ENCODE measurements at regions of chr2 and their contacts with region 1.

Region 1: GRCh38 chr2:42944779-42945415 is 152.5 kb upstream of the HAAO start:
- DNase-seq: no peak
- ATAC-seq: no peak
- H3K4me3 ChIP-seq: no peak overlapping the region
- H3K4me3 Mint-ChIP-seq: no peak overlapping the region
- H3K27ac ChIP-seq: no peak overlapping the region
- H3K27ac Mint-ChIP-seq: no peak overlapping the region
- H3K4me1 ChIP-seq: peaks cover 9% of the 10 kb centered on the region
- H3K4me1 Mint-ChIP-seq: peaks cover 5 to 16% of the 10 kb centered on the region in 2 donors
- H3K27me3 ChIP-seq: no peaks in the 10 kb centered on the region
- H3K27me3 Mint-ChIP-seq: peaks cover 0 to 3% of the 10 kb centered on the region in 2 donors
- CTCF ChIP-seq: no peak

Region 2: GRCh38 chr2:43484323-43484930 is 539.5 kb after region 1 on chr2:
- intact Hi-C with region 1: loop called (anchors 1 kb)
- DNase-seq: peak in 1 of 2 donors; percentile 82
- ATAC-seq: peak in 2 of 3 donors; percentile 44 to 63
- H3K4me3 ChIP-seq: no peak overlapping the region
- H3K4me3 Mint-ChIP-seq: no peak overlapping the region
- H3K27ac ChIP-seq: no peak overlapping the region
- H3K27ac Mint-ChIP-seq: no peak overlapping the region
- H3K4me1 ChIP-seq: no peaks in the 10 kb centered on the region
- H3K4me1 Mint-ChIP-seq: peaks cover 9% of the 10 kb centered on the region in 2 donors
- H3K27me3 ChIP-seq: no peaks in the 10 kb centered on the region
- H3K27me3 Mint-ChIP-seq: no peaks in the 10 kb centered on the region
- CTCF ChIP-seq: peak; percentile 84

Region 3: DNA sequence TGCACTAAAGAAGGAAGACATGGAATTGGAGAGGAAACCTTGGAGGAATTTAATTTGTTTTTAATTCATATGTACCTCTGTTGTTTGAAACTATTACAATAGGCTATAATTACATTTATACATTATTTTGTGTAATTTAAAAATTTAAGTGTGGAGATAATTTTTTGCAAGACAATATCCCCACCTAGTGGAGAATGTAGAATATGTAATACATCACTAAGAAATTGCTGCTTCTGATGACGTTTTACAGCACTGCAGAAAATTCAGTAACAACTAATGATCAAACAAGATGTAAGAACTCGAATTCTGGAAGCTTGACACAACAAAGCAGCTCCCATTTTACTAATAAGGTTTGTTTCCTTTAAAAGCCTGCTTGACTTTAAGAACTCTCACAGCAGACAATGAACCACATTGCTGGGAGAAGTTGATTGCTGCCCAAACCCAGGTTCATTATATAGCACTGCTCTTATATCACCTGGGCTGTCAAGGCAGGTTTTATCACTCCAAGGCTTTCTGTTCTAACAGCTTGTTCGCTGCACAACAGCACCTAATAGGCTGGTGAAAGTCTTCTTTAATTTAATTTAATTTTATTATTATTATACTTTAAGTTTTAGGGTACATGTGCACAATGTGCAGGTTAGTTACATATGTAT is 597.5 kb after region 1 on chr2:
- intact Hi-C with region 1: loop called (anchors 1 kb)
- DNase-seq: peak in 1 of 2 donors; percentile 69
- ATAC-seq: peak in 1 of 3 donors; percentile 57
- H3K4me3 ChIP-seq: no peak overlapping the region
- H3K4me3 Mint-ChIP-seq: no peak overlapping the region
- H3K27ac ChIP-seq: no peak overlapping the region
- H3K27ac Mint-ChIP-seq: no peak overlapping the region
- H3K4me1 ChIP-seq: peaks cover 4% of the 10 kb centered on the region
- H3K4me1 Mint-ChIP-seq: no peaks in the 10 kb centered on the region
- H3K27me3 ChIP-seq: no peaks in the 10 kb centered on the region
- H3K27me3 Mint-ChIP-seq: no peaks in the 10 kb centered on the region
- CTCF ChIP-seq: peak; percentile 68